ENCODE measurements at regions of chrX and their contacts with region 1.

Region 1: GRCh38 chrX:102712952-102713625 is 841 bp downstream of the GPRASP2 start:
- DNase-seq: peak in 4 of 5 donors; percentile 47 to 61 (median 54)
- ATAC-seq: peak; percentile 71 to 88 (median 80)
- H3K4me3 ChIP-seq: peak overlapping the region; percentile 48 to 93 (median 68)
- H3K27ac ChIP-seq: peak overlapping the region; percentile 52 to 92 (median 81)
- H3K4me1 ChIP-seq: peaks cover 0 to 5% (median 0%) of the 10 kb centered on the region in 12 donors
- H3K27me3 ChIP-seq: peaks cover 0 to 19% (median 0%) of the 10 kb centered on the region in 9 donors
- CTCF ChIP-seq: peak; percentile 32 to 74 (median 54)
- POLR2A ChIP-seq: no peak

Region 2: GRCh38 chrX:102498732-102499131 is 214.4 kb before region 1 on chrX:
- intact Hi-C with region 1: loop called in 1 of 10 experiments (anchors 10 kb)
- DNase-seq: no peak
- ATAC-seq: no peak
- H3K4me3 ChIP-seq: no peak overlapping the region
- H3K27ac ChIP-seq: no peak overlapping the region
- H3K4me1 ChIP-seq: no peaks in the 10 kb centered on the region
- H3K27me3 ChIP-seq: peaks cover 0 to 13% (median 0%) of the 10 kb centered on the region in 9 donors
- CTCF ChIP-seq: no peak
- POLR2A ChIP-seq: no peak

Region 3: DNA sequence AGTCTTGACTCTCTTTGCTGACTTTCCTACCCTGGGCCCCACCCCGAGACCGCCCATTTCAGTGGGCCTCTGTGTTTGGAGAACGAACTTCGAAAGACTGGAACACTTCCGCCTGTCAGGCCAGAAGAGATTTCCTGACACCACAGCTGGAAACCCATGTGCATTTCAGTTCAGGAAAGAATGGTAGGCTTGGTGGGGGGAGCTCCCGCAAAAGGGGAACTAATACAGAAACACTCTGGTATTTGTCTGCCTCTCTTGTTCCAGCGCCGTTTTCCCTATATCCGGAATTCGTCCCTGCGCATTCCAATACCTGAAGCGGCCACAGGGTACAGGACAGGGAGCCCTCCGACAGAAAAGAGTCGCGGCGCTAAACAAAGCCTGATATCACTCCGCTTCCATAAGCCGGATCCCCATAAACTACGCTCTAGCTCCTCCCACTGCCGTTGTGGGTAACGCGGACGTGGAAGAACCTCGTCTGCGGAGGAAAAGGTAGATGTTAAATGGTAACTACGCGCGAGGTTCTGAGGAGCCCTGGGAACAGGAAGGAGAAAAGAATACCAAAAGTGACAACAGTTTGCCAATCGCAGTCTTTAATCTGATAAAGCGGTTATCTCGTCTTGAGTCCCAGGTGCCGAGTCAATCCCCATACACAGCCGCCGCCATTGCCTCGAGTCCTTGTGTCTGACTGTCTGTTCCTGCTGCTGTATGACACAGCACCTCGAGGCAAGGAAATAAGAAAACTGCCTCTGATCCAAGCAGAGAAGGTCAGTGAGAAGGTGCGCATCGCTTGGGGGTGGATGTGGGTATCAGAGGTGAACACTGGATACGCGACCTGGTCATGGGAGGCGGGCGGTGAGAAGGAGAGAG is 113.8 kb before region 1 on chrX and contains the start of gene ARMCX5:
- intact Hi-C with region 1: loop called in 3 of 10 experiments (anchors 2 to 10 kb)
- DNase-seq: peak; percentile 69 to 78 (median 71)
- ATAC-seq: peak; percentile 96 to 99 (median 97)
- H3K4me3 ChIP-seq: peak within 1 kb of the TSS; percentile 25 to 90 (median 62)
- H3K27ac ChIP-seq: peak within 1 kb of the TSS in 11 of 12 donors; percentile 48 to 84 (median 76)
- H3K4me1 ChIP-seq: peaks cover 0 to 11% (median 0%) of the 10 kb centered on the region in 12 donors
- H3K27me3 ChIP-seq: no peaks in the 10 kb centered on the region
- CTCF ChIP-seq: peak in 1 of 12 donors; percentile 26
- POLR2A ChIP-seq: peak in 1 of 2 donors; percentile 32
- total RNA-seq, gene ARMCX5: 3.0 to 7.6 (median 5.5) TPM

Region 4: DNA sequence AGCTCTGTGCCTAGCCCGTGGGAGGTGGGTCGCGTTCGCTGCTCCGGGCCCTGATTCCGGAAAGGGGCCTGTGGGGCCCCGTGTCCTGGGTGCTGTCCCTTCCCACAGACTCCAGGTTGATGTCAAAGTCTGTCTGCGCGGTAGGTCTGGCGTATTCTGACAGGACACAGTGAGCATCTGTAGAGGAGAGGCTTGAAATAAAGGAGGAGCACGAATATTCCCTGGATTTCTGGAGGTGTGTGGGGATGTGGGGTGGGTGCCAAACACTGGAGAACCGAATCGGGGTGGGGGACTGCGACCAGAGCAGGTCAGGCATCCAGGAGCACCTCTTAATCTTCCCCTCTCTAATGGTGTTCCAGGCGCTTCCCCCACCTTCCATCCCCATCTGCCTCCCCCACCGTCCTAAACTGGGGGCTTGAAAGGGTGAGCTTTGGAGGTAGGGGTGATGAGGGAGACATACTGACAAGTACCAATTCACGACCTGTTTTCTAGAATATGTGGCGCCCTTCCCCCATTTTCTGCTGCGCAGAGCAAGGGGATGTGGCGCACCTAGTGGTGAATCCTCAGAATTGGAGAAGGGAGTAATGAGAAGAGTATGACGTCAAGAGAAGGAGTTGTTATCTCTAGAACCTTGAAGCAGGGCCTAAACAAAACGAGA is 60.9 kb before region 1 on chrX:
- intact Hi-C with region 1: loop called in 6 of 10 experiments (anchors 5 to 10 kb)
- DNase-seq: peak in 3 of 5 donors; percentile 37 to 46 (median 45)
- ATAC-seq: peak; percentile 45 to 73 (median 64)
- H3K4me3 ChIP-seq: peak overlapping the region; percentile 48 to 82 (median 66)
- H3K27ac ChIP-seq: peak overlapping the region in 9 of 12 donors; percentile 32 to 87 (median 59)
- H3K4me1 ChIP-seq: peaks cover 0 to 9% (median 0%) of the 10 kb centered on the region in 12 donors
- H3K27me3 ChIP-seq: no peaks in the 10 kb centered on the region
- CTCF ChIP-seq: peak; percentile 26 to 68 (median 46)
- POLR2A ChIP-seq: no peak

Region 5: DNA sequence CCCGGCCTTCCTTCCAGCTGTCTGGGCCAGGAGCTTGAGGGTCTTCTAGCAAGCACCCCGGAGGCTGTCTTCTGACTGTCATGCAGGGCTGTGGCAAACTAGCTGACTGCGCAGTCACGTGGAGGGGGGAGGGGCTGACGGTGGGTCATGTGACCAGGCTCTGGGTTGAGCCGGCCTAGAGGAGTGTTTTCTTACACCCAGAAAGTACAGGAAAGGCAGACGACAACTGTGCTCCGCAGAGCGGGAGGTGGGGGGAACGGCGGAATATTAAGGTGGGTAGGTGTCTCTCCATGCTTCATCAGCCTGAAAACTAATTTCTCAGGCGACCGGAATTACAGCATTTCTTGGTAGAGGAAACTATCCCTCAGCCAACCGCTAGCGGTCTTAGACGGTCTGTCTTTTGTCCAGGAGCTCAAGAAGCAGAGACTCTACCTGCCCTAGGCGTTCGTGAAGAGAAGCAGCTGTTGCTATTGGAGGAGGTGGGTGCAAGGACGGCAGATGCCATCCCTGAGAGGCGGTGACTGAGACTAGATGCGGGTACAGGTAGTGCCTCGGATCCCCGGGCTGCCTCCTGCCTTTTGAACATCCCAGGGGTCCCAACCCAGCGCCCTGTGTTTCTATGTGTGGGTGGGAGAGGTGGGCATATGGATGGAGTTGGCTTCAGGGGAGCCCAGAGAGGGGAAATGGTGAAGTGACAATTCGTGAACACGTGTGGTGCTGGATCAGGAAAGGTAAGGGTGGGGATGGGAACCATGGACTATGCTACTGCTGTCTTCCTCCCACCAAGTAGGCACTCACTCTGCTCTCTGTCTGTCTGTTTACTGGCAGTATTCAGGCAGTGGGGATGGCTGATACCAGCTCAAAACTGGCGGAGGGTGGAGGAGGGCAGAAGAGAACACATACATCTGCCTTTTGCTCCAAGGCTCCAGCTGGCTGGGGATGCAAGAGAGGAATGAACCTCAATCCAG is 53.0 kb before region 1 on chrX:
- intact Hi-C with region 1: loop called in 5 of 10 experiments (anchors 10 kb)
- DNase-seq: peak; percentile 83 to 90 (median 87)
- ATAC-seq: peak; percentile 96 to 100 (median 98)
- H3K4me3 ChIP-seq: peak overlapping the region; percentile 5 to 68 (median 48)
- H3K27ac ChIP-seq: peak overlapping the region in 9 of 12 donors; percentile 19 to 73 (median 51)
- H3K4me1 ChIP-seq: peaks cover 0 to 14% (median 0%) of the 10 kb centered on the region in 12 donors
- H3K27me3 ChIP-seq: no peaks in the 10 kb centered on the region
- CTCF ChIP-seq: peak in 1 of 12 donors; percentile 12
- POLR2A ChIP-seq: peak in 1 of 2 donors; percentile 46

Measured in heart left ventricle (tissue), 16 donors.